ENCODE measurements at regions of chr16 and their contacts with region 1.

Region 1: GRCh38 chr16:17744903-17745575 is 274.3 kb upstream of the XYLT1 start:
- DNase-seq: no peak
- H3K4me3 ChIP-seq: no peak overlapping the region
- H3K27ac ChIP-seq: no peak overlapping the region
- H3K4me1 ChIP-seq: no peaks in the 10 kb centered on the region
- H3K27me3 ChIP-seq: peaks cover 62% of the 10 kb centered on the region
- CTCF ChIP-seq: no peak

Region 2: GRCh38 chr16:17448640-17449638 is 296.1 kb before region 1 on chr16:
- intact Hi-C with region 1: no loop called
- DNase-seq: peak; percentile 61
- H3K4me3 ChIP-seq: no peak overlapping the region
- H3K27ac ChIP-seq: no peak overlapping the region
- H3K4me1 ChIP-seq: peaks cover 16% of the 10 kb centered on the region
- H3K27me3 ChIP-seq: no peaks in the 10 kb centered on the region
- CTCF ChIP-seq: no peak

Region 3: GRCh38 chr16:17784073-17784472 is 39.0 kb after region 1 on chr16:
- intact Hi-C with region 1: loop called (anchors 5 kb)
- DNase-seq: no peak
- H3K4me3 ChIP-seq: no peak overlapping the region
- H3K27ac ChIP-seq: no peak overlapping the region
- H3K4me1 ChIP-seq: no peaks in the 10 kb centered on the region
- H3K27me3 ChIP-seq: peaks cover 39% of the 10 kb centered on the region
- CTCF ChIP-seq: no peak

Region 4: GRCh38 chr16:17828012-17828411 is 83.0 kb after region 1 on chr16:
- intact Hi-C with region 1: no loop called
- DNase-seq: no peak
- H3K4me3 ChIP-seq: no peak overlapping the region
- H3K27ac ChIP-seq: no peak overlapping the region
- H3K4me1 ChIP-seq: no peaks in the 10 kb centered on the region
- H3K27me3 ChIP-seq: no peaks in the 10 kb centered on the region
- CTCF ChIP-seq: no peak

Measured in left ventricle myocardium inferior (tissue), 1 donor.